H1 (cell line): ENCODE measurements at regions of chr2 and their contacts with region 1.

Region 1: GRCh38 chr2:79275197-79275596 is 115.6 kb upstream of the REG3A start:
- DNase-seq: no peak
- H3K4me3 ChIP-seq: no peak overlapping the region
- H3K27ac ChIP-seq: no peak overlapping the region
- H3K4me1 ChIP-seq: peaks cover 0 to 4% (median 2%) of the 10 kb centered on the region in 4 experiments; a peak in 4 of 7 replicates
- H3K27me3 ChIP-seq: no peaks in the 10 kb centered on the region
- CTCF ChIP-seq: peak in 2 of 3 experiments; percentile 10 to 35; a peak in 2 of 4 replicates
- EP300 ChIP-seq: no peak
- POLR2A ChIP-seq: no peak
- RAD21 ChIP-seq: peak in 1 of 2 experiments; percentile 12; a peak in 1 of 4 replicates

Region 2: GRCh38 chr2:79259296-79259695 is 15.9 kb before region 1 on chr2:
- CTCF ChIA-PET with region 1: interaction called, 14 read pairs
- POLR2A ChIA-PET with region 1: no interaction called
- DNase-seq: no peak
- H3K4me3 ChIP-seq: no peak overlapping the region
- H3K27ac ChIP-seq: no peak overlapping the region
- H3K4me1 ChIP-seq: no peaks in the 10 kb centered on the region
- H3K27me3 ChIP-seq: no peaks in the 10 kb centered on the region
- CTCF ChIP-seq: no peak
- EP300 ChIP-seq: no peak
- POLR2A ChIP-seq: no peak
- RAD21 ChIP-seq: no peak

Region 3: DNA sequence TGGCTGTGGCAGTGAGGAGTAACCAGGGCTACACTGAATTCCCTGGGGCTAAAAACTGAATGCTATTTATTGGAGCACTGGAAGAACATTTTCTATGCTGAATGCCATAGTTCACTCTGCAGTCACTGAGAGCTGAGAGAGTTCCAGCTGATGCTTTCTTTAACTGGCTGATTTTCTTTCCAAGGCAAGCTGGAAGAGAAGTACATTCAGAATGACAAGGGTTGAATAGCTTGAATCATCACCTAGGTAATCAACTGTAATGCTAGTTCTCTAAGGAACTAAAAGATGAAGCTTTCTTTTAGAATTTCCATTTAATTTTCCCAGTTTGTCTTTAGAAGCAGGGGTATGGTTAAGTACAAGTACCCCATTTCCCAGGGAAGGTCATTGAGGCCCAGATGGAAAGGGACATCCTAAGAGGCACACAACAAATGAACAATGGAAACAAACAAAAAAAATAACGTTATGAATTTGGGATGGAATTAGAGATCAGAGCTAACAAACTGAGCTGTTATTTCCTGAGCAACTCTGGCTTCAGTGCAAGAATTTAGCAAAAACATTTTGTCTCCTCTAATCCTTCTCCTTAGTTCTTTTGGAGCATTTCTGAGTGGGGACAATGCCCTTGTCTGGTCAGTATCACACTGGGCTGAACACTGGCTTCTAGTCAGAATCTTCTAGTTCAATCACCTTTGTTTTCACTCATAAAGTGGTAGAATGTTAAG is 17.2 kb after region 1 on chr2:
- CTCF ChIA-PET with region 1: interaction called, 11 read pairs
- POLR2A ChIA-PET with region 1: no interaction called
- DNase-seq: no peak
- H3K4me3 ChIP-seq: no peak overlapping the region
- H3K27ac ChIP-seq: no peak overlapping the region
- H3K4me1 ChIP-seq: no peaks in the 10 kb centered on the region
- H3K27me3 ChIP-seq: no peaks in the 10 kb centered on the region
- CTCF ChIP-seq: no peak
- EP300 ChIP-seq: no peak
- POLR2A ChIP-seq: no peak
- RAD21 ChIP-seq: no peak